MCF 10A (cell line): ENCODE measurements at regions of chr17 and their contacts with region 1.

Region 1: GRCh38 chr17:16438557-16439302 is 23.4 kb downstream of the TRPV2 start:
- DNase-seq: peak; percentile 100
- H3K4me3 Mint-ChIP-seq: peak overlapping the region; percentile 88
- H3K27ac Mint-ChIP-seq: peak overlapping the region; percentile 99
- H3K4me1 Mint-ChIP-seq: peaks cover 21% of the 10 kb centered on the region
- H3K27me3 Mint-ChIP-seq: no peaks in the 10 kb centered on the region
- CTCF ChIP-seq: no peak

Region 2: DNA sequence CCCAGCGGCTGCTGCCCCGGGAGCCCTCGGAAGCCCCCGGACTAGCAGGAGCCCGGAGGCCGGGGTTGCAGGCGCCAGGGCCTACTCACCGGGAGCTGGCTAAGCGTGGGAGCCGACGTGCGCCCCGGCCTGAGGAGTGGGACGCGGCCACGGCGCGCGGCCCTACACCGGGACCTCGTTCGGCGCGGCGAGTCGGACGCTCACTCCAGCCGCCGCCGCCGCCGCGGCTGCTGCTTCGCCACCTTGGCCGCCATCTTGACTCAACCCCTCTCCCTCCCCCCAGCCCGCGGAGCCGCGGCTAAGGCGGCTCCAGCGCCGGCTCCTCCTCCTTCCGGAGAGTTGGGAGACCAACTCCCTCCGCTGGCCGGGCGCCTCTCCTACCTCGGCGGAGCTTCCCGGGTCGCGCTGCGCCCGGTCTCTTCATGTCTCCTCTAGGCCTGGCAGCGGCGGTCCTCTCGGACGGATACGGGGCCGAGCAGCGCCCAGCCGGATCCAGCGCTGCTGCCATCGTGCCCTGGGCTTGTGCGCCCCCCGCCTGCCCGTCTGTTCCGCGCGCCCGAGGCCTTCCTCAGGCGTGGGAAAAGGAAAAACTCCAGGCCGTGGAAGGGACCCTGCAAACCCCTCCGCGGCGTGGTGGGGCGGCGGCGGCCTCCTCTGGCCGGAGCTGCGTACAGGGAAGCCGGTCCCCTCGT is 223.3 kb before region 1 on chr17 and contains the start of gene NCOR1:
- CTCF ChIA-PET with region 1: no interaction called
- POLR2A ChIA-PET with region 1: interaction called, 10 read pairs
- intact Hi-C with region 1: no loop called
- DNase-seq: peak; percentile 95
- H3K4me3 Mint-ChIP-seq: peak within 1 kb of the TSS; percentile 99
- H3K27ac Mint-ChIP-seq: peak within 1 kb of the TSS; percentile 84
- H3K4me1 Mint-ChIP-seq: peaks cover 11% of the 10 kb centered on the region
- H3K27me3 Mint-ChIP-seq: no peaks in the 10 kb centered on the region
- CTCF ChIP-seq: peak; percentile 20
- total RNA-seq, gene NCOR1: 120 and 138 TPM in 2 replicates

Region 3: DNA sequence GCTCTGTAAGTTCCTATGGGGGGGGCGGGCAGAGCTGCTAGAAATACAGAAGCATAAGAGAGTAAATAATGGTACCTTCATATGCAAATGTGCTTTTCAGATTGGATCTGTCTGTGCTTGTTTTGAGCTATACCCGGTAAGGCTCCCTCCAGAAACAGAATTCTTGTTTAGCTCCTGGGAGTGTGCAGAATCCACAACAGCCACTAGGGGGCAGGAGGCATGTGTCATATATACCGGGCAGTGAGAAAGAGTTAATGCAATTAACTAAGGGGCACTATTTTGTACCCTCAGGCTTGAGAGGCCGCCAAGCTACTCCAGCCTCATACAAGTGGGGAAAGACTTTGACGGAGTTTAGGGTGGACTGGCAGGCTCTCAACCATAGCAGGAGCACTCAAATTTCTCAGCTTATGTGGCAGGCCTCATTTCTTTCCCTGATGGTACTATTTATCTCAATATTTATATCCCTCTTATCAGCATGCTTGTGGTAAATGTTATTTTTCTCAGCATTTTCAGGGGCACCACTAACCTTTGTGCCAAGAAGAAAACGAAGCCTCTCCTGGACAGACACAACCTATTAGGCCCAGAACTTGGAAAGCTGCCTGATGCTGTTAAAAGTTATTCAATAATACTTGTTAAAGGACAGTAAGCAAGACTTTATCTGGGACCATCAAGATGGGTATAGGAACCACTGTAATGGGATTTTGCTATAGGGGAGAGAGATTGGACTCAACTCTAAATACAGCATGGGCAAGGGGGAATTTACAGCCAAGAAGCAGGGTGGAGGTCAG is 74.8 kb before region 1 on chr17:
- CTCF ChIA-PET with region 1: interaction called, 44 read pairs
- POLR2A ChIA-PET with region 1: interaction called, 52 read pairs
- intact Hi-C with region 1: loop called (anchors 5 kb)
- DNase-seq: peak; percentile 78
- H3K4me3 Mint-ChIP-seq: no peak overlapping the region
- H3K27ac Mint-ChIP-seq: no peak overlapping the region
- H3K4me1 Mint-ChIP-seq: no peaks in the 10 kb centered on the region
- H3K27me3 Mint-ChIP-seq: no peaks in the 10 kb centered on the region
- CTCF ChIP-seq: peak; percentile 74

Region 4: DNA sequence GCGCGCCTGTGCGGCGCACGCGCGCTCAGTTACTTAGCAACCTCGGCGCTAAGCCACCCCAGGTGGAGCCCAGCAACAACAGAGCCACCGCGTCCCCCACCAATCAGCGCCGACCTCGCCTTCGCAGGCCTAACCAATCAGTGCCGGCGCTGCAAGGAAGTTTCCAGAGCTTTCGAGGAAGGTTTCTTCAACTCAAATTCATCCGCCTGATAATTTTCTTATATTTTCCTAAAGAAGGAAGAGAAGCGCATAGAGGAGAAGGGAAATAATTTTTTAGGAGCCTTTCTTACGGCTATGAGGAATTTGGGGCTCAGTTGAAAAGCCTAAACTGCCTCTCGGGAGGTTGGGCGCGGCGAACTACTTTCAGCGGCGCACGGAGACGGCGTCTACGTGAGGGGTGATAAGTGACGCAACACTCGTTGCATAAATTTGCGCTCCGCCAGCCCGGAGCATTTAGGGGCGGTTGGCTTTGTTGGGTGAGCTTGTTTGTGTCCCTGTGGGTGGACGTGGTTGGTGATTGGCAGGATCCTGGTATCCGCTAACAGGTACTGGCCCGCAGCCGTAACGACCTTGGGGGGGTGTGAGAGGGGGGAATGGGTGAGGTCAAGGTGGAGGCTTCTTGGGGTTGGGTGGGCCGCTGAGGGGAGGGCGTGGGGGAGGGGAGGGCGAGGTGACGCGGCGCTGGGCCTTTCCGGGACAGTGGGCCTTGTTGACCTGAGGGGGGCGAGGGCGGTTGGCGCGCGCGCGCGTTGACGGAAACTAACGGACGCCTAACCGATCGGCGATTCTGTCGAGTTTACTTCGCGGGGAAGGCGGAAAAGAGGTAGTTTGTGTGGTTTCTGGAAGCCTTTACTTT is 57.9 kb before region 1 on chr17 and contains the start of gene UBB:
- CTCF ChIA-PET with region 1: interaction called, 6 read pairs
- POLR2A ChIA-PET with region 1: interaction called, 238 read pairs
- intact Hi-C with region 1: loop called (anchors 2 kb)
- DNase-seq: peak; percentile 96
- H3K4me3 Mint-ChIP-seq: peak within 1 kb of the TSS; percentile 89
- H3K27ac Mint-ChIP-seq: peak within 1 kb of the TSS; percentile 100
- H3K4me1 Mint-ChIP-seq: peaks cover 32% of the 10 kb centered on the region
- H3K27me3 Mint-ChIP-seq: no peaks in the 10 kb centered on the region
- CTCF ChIP-seq: no peak
- total RNA-seq, gene UBB: 626 and 729 TPM in 2 replicates

Region 5: DNA sequence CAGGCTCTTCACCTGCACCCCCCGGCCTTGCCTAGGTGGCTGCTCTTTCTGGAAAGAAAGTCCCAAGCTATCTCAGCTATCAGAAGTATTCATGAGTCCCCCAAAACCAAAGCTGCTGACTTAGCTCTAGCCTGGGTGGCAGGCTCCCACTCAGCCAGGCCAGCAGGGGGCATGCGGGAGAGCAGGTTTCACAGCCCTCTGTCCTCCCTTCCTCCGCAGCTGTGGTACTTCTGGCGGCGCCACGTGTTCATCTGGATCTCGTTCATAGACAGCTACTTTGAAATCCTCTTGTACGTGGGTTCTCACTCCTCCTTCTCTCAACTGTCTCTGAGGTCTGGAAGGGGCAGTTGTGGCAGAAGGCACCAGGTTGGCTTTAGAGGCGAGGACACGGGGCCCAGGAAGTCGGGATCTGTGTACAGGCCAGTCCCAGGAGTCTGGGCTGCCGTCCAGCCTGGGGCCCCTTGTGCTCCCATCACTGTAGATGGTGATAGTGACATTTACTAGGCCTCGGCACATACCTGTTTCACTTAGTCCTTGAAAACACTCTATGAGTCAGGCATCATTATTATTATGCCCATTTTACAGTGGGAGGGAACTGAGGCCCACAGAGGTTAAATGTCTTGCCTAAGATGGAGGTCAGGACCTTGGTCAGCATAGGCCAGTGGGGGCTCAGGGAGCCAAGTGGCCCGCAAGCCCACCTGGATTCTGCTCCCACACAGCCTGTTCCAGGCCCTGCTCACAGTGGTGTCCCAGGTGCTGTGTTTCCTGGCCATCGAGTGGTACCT is 10.4 kb before region 1 on chr17:
- CTCF ChIA-PET with region 1: interaction called, 7 read pairs
- POLR2A ChIA-PET with region 1: interaction called, 10 read pairs
- intact Hi-C with region 1: no loop called
- DNase-seq: peak; percentile 56
- H3K4me3 Mint-ChIP-seq: no peak overlapping the region
- H3K27ac Mint-ChIP-seq: no peak overlapping the region
- H3K4me1 Mint-ChIP-seq: no peaks in the 10 kb centered on the region
- H3K27me3 Mint-ChIP-seq: no peaks in the 10 kb centered on the region
- CTCF ChIP-seq: peak; percentile 46

Region 6: GRCh38 chr17:16491703-16492612 is 53.2 kb after region 1 on chr17 and contains the start of gene LRRC75A:
- CTCF ChIA-PET with region 1: no interaction called
- POLR2A ChIA-PET with region 1: interaction called, 11 read pairs
- intact Hi-C with region 1: no loop called
- DNase-seq: peak; percentile 18
- H3K4me3 Mint-ChIP-seq: peak within 1 kb of the TSS; percentile 57
- H3K27ac Mint-ChIP-seq: no peak within 1 kb of the TSS
- H3K4me1 Mint-ChIP-seq: peaks cover 11% of the 10 kb centered on the region
- H3K27me3 Mint-ChIP-seq: peaks cover 57% of the 10 kb centered on the region
- CTCF ChIP-seq: no peak
- total RNA-seq, gene LRRC75A: 0.29 and 0.30 TPM in 2 replicates